Activated B cell treated with CpG ODN at 0.5 μM for 24 hours (primary cell): ENCODE measurements at regions of chr6 and their contacts with region 1.

Region 1: DNA sequence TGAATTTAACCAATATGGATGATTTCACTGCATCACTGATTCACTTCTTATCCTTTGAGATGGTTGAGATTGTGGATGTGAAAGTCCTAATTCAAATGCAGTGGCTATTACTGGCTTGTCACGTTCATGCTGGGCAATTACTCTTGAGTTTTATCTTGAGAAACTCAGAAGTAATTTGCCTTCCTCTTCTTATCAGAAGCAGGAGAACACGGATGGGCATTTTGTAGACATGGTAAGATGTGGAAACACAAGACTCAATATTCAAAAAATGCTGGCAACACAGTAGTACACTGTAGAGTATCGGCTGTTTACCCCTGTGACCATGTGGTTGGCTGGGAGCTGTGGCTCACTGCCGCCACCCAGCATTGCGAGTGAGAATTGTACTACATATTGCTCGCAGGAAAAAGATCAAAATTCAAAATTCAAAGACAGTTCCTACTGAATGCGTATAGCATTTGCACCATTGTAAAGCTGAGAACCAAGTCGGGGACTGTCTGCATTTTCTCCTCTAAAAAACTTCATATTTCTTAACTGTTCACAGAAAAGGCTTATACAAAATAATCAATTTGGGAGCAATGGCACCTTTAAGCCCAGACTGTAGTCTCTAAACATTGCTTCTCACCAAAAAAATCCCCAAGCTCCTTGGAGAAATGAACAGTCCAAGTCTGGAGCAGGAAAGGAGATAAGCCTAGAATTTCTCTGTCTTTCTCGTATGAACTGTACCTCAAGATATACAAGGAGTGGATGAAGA is 61.9 kb upstream of the ELOVL5 start:
- DNase-seq: peak; percentile 20
- ATAC-seq: peak; percentile 98
- H3K4me3 Mint-ChIP-seq: peak overlapping the region; percentile 70
- H3K27ac Mint-ChIP-seq: peak overlapping the region; percentile 82
- H3K4me1 Mint-ChIP-seq: peaks cover 9% of the 10 kb centered on the region
- H3K27me3 Mint-ChIP-seq: no peaks in the 10 kb centered on the region
- CTCF ChIP-seq: no peak

Region 2: DNA sequence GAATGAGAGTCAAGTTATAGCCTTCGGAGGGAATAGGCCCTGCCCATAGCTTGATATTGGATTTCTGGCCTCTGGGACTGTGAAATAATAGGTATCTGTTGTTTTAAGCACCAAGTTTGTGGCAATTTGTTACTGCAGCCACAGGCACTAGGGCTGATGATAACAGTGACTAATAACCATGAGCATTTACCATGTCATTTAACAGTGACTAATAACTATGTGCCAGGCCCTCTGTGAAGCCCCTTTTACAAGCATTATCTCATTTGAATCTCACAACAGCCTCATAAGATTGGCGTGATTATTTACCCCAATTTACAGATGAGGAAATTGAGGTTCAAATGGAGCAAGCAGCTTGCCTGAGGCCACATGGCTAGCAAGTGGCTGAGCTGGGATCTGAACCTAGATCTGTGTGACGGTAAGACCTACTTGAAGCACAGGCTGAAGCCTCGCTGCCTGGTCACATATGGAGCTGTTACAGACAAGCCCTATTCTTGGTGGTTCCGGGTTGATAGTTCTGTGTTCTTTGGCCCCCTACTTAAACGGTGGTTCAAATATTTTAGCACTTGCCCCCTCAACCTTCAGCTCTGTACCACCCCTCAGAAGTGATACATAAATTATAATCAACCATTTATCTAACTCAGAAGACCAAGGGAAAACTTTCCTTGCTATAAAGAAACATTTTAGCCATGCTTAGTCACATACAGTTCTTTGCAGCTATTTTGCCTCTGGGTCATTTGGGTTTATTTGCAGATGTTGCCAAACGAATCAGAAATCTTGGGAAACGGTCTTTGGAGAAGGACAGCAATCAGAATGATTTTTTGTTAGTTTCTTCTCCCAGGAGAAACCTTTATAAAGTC is 160.3 kb before region 1 on chr6:
- CTCF ChIA-PET with region 1: no interaction called
- POLR2A ChIA-PET with region 1: interaction called, 3 read pairs
- intact Hi-C with region 1: loop called (anchors 2 kb)
- DNase-seq: no peak
- ATAC-seq: peak; percentile 77
- H3K4me3 Mint-ChIP-seq: peak overlapping the region; percentile 17
- H3K27ac Mint-ChIP-seq: peak overlapping the region; percentile 88
- H3K4me1 Mint-ChIP-seq: peaks cover 82% of the 10 kb centered on the region
- H3K27me3 Mint-ChIP-seq: no peaks in the 10 kb centered on the region
- CTCF ChIP-seq: no peak

Region 3: DNA sequence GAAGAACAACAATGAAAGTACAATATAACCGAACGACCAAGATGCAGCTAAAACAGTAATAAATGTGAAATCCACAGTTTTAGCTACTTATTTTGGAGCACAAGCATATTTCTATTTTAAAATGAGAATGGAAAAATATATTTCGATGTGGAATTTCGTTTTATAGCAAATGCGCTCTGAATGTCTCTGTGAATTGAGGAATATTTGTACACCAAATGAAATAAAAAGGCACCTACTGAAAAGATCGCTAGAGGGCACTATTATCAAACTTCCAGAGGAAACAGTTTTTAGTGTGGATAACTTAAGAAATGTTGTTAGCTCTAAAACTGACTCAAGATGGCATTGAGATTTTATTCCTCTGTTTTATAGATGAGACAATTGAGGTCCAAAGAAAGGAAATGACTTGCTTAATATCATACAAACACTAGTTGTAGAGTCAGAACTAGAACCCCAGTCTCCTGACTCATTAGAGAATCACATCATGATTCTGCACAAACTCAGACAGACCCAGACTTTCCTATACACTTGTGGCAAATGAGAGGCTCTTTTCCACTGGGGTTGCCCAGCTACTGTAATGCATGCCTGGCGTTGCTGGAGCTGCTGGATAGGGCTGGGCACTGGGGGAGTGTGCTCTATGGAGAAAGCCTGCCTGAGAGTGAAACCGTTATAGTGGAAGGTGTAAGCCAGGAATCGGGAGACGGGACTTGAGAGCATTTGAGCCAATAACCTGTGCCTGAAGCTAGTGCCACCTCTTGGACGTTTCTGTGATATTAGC is 82.4 kb after region 1 on chr6:
- CTCF ChIA-PET with region 1: no interaction called
- POLR2A ChIA-PET with region 1: no interaction called
- intact Hi-C with region 1: no loop called
- DNase-seq: no peak
- ATAC-seq: peak; percentile 14
- H3K4me3 Mint-ChIP-seq: no peak overlapping the region
- H3K27ac Mint-ChIP-seq: no peak overlapping the region
- H3K4me1 Mint-ChIP-seq: peaks cover 5% of the 10 kb centered on the region
- H3K27me3 Mint-ChIP-seq: no peaks in the 10 kb centered on the region
- CTCF ChIP-seq: peak; percentile 64